ENCODE measurements at regions of chr4 and their contacts with region 1.

Region 1: GRCh38 chr4:98260579-98261290 is 449 bp upstream of the RAP1GDS1 start:
- DNase-seq: peak; percentile 83 to 85
- H3K4me3 ChIP-seq: peak overlapping the region; percentile 76 to 96 (median 90)
- H3K27ac ChIP-seq: peak overlapping the region; percentile 93
- H3K4me1 ChIP-seq: peaks cover 1 to 9% (median 7%) of the 10 kb centered on the region in 4 experiments; a peak in 5 of 7 replicates
- H3K27me3 ChIP-seq: no peaks in the 10 kb centered on the region
- CTCF ChIP-seq: no peak
- EP300 ChIP-seq: no peak
- POLR2A ChIP-seq: peak; percentile 57 to 74
- RAD21 ChIP-seq: no peak

Region 2: DNA sequence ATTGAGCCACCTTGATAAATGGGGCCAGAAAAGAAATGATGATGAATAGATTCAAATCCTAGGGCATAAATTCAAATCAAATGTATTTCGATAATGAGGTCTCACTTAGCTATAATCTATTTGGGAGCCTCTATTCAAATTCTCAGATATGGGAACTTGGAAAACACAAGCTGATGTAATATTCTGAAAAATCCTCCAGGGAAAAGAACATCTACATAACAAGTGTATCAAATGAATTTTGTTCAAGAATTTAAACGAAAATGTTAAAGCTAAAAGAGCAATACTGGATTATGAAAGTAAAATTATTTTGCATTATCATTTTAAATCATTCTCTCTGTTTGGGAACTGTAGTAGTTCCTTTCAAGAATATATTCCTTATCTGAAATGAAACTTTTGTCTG is 38.4 kb before region 1 on chr4:
- CTCF ChIA-PET with region 1: no interaction called
- POLR2A ChIA-PET with region 1: no interaction called
- DNase-seq: no peak
- H3K4me3 ChIP-seq: no peak overlapping the region
- H3K27ac ChIP-seq: no peak overlapping the region
- H3K4me1 ChIP-seq: no peaks in the 10 kb centered on the region
- H3K27me3 ChIP-seq: no peaks in the 10 kb centered on the region
- CTCF ChIP-seq: no peak
- EP300 ChIP-seq: no peak
- POLR2A ChIP-seq: no peak
- RAD21 ChIP-seq: no peak

Region 3: DNA sequence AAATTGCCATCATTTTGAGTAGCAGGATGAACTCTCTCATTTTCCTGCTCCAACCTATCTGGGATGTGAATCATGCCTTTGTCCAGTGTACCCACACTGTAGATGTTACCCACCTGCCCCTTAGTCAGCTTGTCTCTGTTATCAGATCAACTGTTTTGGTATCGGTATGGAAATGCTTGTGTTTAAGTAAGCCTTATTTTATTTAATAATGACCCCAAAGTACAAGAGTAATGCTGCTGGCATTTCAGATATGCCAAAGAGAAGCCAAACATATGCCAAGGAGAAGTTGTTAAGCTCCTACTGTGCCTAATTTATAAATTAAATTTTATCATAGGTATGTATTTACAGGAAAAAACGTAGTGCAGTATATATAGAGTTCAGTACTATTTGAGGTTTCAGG is 18.2 kb before region 1 on chr4:
- CTCF ChIA-PET with region 1: no interaction called
- POLR2A ChIA-PET with region 1: no interaction called
- DNase-seq: no peak
- H3K4me3 ChIP-seq: no peak overlapping the region
- H3K27ac ChIP-seq: no peak overlapping the region
- H3K4me1 ChIP-seq: peaks cover 0 to 5% (median 0%) of the 10 kb centered on the region in 4 experiments; a peak in 1 of 7 replicates
- H3K27me3 ChIP-seq: no peaks in the 10 kb centered on the region
- CTCF ChIP-seq: no peak
- EP300 ChIP-seq: no peak
- POLR2A ChIP-seq: no peak
- RAD21 ChIP-seq: no peak

Region 4: DNA sequence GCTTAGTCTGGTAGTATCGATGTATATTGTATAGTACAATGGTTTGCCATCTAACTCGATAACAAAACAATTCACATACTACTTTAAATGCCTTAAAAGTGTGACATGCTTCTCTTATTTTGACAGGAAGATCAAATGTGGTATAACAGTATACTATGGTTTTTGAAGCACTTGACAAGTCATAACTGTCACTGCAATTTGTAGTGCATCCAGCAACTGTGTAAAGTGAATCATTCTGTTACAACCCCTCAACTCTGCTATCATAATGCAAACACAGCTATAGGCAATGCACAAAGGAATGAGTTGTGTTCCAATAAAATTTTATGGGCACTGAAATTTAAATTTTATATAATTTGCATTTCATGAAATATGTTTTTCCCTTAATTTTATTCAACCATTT is 14.4 kb after region 1 on chr4:
- CTCF ChIA-PET with region 1: no interaction called
- POLR2A ChIA-PET with region 1: interaction called, 21 read pairs
- DNase-seq: no peak
- H3K4me3 ChIP-seq: no peak overlapping the region
- H3K27ac ChIP-seq: no peak overlapping the region
- H3K4me1 ChIP-seq: no peaks in the 10 kb centered on the region
- H3K27me3 ChIP-seq: peaks cover 0 to 1% (median 0%) of the 10 kb centered on the region in 4 experiments; a peak in 1 of 7 replicates
- CTCF ChIP-seq: no peak
- EP300 ChIP-seq: no peak
- POLR2A ChIP-seq: no peak
- RAD21 ChIP-seq: no peak

Region 5: DNA sequence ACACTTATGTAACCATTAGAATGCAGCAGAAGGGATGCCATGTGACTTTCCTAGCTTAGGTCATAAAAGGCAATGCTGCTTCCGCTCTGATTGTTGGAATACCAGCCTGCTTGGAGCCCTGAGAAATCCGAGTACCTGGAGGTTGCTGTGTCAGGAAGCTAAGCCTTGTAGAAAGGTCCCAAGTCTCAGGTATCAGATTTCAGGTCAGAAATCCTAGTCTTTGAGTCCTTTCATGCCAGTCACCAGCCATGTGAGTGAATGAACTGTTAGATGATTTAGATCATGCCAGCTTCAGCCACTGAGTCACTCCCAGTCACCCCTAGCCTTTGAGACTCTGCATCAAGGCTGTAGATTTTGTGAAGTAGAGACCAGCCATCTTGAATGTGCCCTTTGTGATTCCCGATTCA is 23.9 kb after region 1 on chr4:
- CTCF ChIA-PET with region 1: no interaction called
- POLR2A ChIA-PET with region 1: interaction called, 21 read pairs
- DNase-seq: peak in 1 of 2 experiments; percentile 63
- H3K4me3 ChIP-seq: 0 out of 8 replicates have a peak overlapping the region, but pooled peaks of 1 of the 4 experiments have one; percentile 7
- H3K27ac ChIP-seq: peak overlapping the region; percentile 60; the same call in 1 of the 2 replicates
- H3K4me1 ChIP-seq: peaks cover 0 to 5% (median 2%) of the 10 kb centered on the region in 4 experiments; a peak in 3 of 7 replicates
- H3K27me3 ChIP-seq: no peaks in the 10 kb centered on the region
- CTCF ChIP-seq: no peak
- EP300 ChIP-seq: no peak
- POLR2A ChIP-seq: peak in 1 of 2 experiments; percentile 42; a peak in 1 of 3 replicates
- RAD21 ChIP-seq: no peak

Region 6: DNA sequence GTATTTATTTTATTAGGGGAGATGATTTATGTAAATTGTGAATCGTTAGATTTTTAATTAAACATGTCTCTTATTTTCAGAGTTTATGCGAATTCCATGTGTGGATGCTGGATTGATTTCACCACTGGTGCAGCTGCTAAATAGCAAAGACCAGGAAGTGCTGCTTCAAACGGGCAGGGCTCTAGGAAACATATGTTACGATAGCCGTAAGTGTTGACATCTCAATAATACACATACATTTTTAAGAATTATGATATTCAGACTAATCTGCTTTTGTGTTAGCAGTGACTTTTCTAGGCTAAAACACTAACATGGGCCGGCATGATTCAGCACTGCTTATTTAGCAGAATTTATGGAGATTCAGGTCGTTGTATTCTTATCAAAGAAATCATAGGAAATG is 91.7 kb after region 1 on chr4:
- CTCF ChIA-PET with region 1: no interaction called
- POLR2A ChIA-PET with region 1: no interaction called
- DNase-seq: no peak
- H3K4me3 ChIP-seq: no peak overlapping the region
- H3K27ac ChIP-seq: no peak overlapping the region
- H3K4me1 ChIP-seq: no peaks in the 10 kb centered on the region
- H3K27me3 ChIP-seq: no peaks in the 10 kb centered on the region
- CTCF ChIP-seq: no peak
- EP300 ChIP-seq: no peak
- POLR2A ChIP-seq: no peak
- RAD21 ChIP-seq: no peak